GM12878 (cell line): ENCODE measurements at regions of chr19 and their contacts with region 1.

Region 1: GRCh38 chr19:5281588-5281987 is 59.0 kb downstream of the PTPRS start:
- DNase-seq: no peak
- ATAC-seq: no peak
- H3K4me3 ChIP-seq: no peak overlapping the region
- H3K27ac ChIP-seq: no peak overlapping the region
- H3K4me1 ChIP-seq: no peaks in the 10 kb centered on the region
- H3K27me3 ChIP-seq: no peaks in the 10 kb centered on the region
- CTCF ChIP-seq: no peak
- EP300 ChIP-seq: no peak
- POLR2A ChIP-seq: no peak
- RAD21 ChIP-seq: no peak

Region 2: DNA sequence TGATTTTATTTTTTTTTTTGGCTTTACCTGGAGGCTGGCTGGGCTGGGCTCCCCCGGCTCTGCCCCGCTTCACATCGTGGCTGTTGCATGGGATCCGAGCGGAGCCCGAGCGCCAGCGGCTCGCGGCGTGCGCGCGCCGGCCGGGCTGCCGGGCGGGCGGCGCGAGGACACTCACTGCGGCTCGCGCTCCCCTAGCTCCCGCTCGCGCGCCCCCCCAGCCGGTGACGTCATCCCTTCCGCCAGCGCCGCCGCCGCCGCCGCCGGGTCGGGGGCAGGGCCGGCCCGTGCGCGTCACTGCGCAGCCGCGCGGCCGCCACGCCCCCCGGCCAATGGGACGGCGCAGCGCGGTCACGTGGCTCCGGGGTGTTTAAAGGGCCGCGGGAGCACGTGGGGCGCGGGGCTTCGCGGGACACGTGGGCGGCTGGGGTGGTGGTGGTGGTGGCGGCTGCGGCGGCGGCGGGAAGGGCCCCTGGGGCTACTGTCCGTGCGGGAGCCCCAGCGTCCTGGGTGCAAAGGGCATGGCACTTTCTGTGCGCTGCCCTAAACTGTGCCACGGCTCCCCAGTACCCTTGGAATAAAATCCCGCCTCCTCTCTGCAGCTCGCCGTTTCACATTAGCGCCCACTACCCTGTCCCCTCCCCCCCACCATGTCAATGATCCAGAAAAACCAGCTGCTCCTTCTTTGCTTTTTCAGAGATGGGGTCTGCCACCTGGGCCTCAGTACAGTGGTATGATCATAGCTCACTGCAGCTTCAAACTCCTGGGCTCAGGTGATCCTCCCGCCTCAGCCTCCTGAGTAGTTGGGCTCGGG is 59.3 kb after region 1 on chr19 and contains the start of gene PTPRS:
- CTCF ChIA-PET with region 1: interaction called, 4 read pairs
- POLR2A ChIA-PET with region 1: interaction called, 4 read pairs
- RAD21 ChIA-PET with region 1: no interaction called
- SMC1A ChIA-PET with region 1: no interaction called
- in situ Hi-C with region 1: no loop called
- intact Hi-C with region 1: loop called (anchors 10 kb)
- DNase-seq: no peak
- ATAC-seq: peak; percentile 59
- H3K4me3 ChIP-seq: peak within 1 kb of the TSS; percentile 55; the same call in 1 of the 2 replicates
- H3K27ac ChIP-seq: no peak within 1 kb of the TSS
- H3K4me1 ChIP-seq: peaks cover 8% of the 10 kb centered on the region
- H3K27me3 ChIP-seq: peaks cover 2 to 9% of the 10 kb centered on the region in 2 experiments; a peak in 2 of 4 replicates
- CTCF ChIP-seq: no peak
- EP300 ChIP-seq: 0 out of 4 replicates have a peak, but pooled peaks of 1 of the 2 experiments have one; percentile 12
- POLR2A ChIP-seq: no peak
- RAD21 ChIP-seq: no peak
- polyA plus RNA-seq, gene PTPRS: 0.09 to 0.23 TPM